ENCODE measurements at regions of chr7 and their contacts with region 1.

Region 1: DNA sequence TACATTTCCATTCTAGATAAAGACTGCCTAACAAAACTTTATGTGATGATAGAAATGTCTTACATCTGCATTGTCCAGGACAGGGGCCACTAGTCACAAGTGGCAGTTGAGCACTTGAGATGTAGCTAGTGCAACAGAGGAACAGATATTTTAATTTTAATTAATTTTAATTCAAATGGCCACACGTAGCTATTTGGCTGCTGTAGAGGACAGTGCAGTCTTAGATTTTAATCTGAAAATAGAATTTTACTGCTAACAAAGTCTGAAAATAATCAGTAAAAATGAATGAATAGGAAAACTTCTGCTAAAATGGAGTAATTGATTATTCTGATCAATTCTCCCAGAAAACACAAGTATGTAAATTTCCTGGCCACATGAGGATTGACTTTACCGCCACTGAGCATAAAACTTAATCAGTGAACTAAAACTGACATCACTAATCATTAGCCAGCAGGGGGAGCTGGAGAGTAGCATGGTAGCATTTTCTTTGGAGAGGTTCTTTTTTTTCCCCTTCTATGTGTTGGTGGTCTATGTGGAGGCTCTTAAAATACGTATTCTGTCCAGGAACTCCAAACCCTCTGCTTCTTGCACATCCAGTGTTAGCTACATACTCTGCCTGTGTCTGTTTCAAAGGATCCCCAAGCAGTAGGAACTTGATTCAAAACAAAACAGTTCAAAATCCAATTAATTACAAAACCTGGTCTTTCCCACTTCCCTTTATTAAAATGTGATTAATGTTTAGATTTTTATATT is 52.1 kb downstream of the TSPAN12 start:
- DNase-seq: peak in 4 of 6 donors; percentile 21 to 56 (median 44)
- ATAC-seq: peak; percentile 59 to 93 (median 83)
- H3K4me3 ChIP-seq: no peak overlapping the region
- H3K27ac ChIP-seq: no peak overlapping the region
- H3K4me1 ChIP-seq: peaks cover 0 to 5% (median 0%) of the 10 kb centered on the region in 3 donors
- H3K27me3 ChIP-seq: no peaks in the 10 kb centered on the region
- CTCF ChIP-seq: peak; percentile 64 to 75 (median 68)

Region 2: GRCh38 chr7:120645966-120646365 is 159.8 kb before region 1 on chr7:
- intact Hi-C with region 1: no loop called
- DNase-seq: no peak
- ATAC-seq: no peak
- H3K4me3 ChIP-seq: no peak overlapping the region
- H3K27ac ChIP-seq: no peak overlapping the region
- H3K4me1 ChIP-seq: no peaks in the 10 kb centered on the region
- H3K27me3 ChIP-seq: no peaks in the 10 kb centered on the region
- CTCF ChIP-seq: no peak

Region 3: DNA sequence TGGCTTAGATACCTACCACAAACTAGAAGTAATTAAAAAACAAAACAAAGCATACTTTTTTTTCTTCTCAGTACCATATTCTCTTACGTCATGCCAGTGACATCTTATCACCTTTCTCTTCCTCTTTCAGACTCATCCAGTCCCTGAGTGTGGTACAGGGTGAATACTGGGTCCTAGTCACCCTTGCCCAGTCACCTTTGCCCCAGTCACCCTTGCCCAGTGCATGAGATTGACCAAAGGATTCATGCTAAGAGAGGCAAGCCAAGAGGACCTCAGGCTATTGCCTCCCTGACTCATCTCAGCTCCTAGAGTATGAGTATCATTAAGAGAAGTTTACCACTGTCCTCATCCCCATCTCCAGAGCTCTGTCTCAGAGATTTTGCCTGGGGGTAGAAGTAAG is 62.1 kb after region 1 on chr7:
- intact Hi-C with region 1: loop called in 1 of 3 experiments (anchors 10 kb)
- DNase-seq: no peak
- ATAC-seq: no peak
- H3K4me3 ChIP-seq: no peak overlapping the region
- H3K27ac ChIP-seq: no peak overlapping the region
- H3K4me1 ChIP-seq: no peaks in the 10 kb centered on the region
- H3K27me3 ChIP-seq: no peaks in the 10 kb centered on the region
- CTCF ChIP-seq: no peak

Region 4: GRCh38 chr7:120950539-120951308 is 144.9 kb after region 1 on chr7 and contains the start of gene ING3:
- intact Hi-C with region 1: no loop called
- DNase-seq: peak; percentile 96 to 98 (median 97)
- ATAC-seq: peak; percentile 94 to 98 (median 97)
- H3K4me3 ChIP-seq: peak within 1 kb of the TSS; percentile 33 to 62 (median 52)
- H3K27ac ChIP-seq: peak within 1 kb of the TSS; percentile 91 to 95 (median 94)
- H3K4me1 ChIP-seq: peaks cover 8 to 18% (median 18%) of the 10 kb centered on the region in 3 donors
- H3K27me3 ChIP-seq: no peaks in the 10 kb centered on the region
- CTCF ChIP-seq: no peak
- total RNA-seq, gene ING3: 6.2 to 10.1 (median 7.6) TPM

Region 5: GRCh38 chr7:121107923-121108498 is 302.2 kb after region 1 on chr7:
- intact Hi-C with region 1: no loop called
- DNase-seq: no peak
- ATAC-seq: peak; percentile 78 to 88 (median 87)
- H3K4me3 ChIP-seq: no peak overlapping the region
- H3K27ac ChIP-seq: no peak overlapping the region
- H3K4me1 ChIP-seq: peaks cover 0 to under 1% (median 0%) of the 10 kb centered on the region in 3 donors
- H3K27me3 ChIP-seq: no peaks in the 10 kb centered on the region
- CTCF ChIP-seq: peak; percentile 45 to 73 (median 60)

Measured in pancreas (tissue), 10 donors.